ENCODE measurements at regions of chr14 and their contacts with region 1.

Region 1: DNA sequence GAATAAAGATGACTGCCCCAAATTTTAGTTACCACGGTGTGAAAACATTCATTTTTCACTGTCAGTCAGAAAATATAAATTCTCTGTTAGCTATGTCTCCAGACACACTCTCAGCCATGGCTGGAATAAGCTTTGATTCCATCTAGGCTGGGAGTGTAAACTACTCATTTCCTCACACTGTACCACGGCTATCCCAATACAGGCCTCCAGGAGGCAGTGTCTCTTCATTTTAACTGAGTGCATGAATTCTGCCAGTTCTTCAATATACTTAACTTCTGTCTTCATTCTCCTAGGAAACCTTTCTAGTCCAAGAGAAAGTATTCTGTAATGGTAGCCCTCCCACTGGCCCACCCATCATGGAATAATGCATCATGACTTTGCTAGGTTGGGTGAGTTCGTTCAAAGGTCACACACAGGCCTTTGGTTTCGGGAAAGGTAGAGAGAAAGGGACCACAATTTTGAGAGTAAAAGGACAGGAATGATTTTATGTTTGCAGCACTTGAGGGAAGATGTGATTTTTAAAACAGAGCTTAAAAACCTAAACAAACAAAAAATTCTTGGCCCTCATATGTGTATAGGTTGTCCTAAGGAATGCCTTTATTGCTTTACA is 381.1 kb downstream of the SEC23A start:
- DNase-seq: peak; percentile 65 to 83
- H3K4me3 ChIP-seq: no peak overlapping the region
- H3K27ac ChIP-seq: no peak overlapping the region
- H3K4me1 ChIP-seq: peaks cover 0 to 2% (median 0%) of the 10 kb centered on the region in 4 donors
- H3K27me3 ChIP-seq: no peaks in the 10 kb centered on the region
- CTCF ChIP-seq: peak in 5 of 7 experiments; percentile 63 to 78 (median 75)
- EP300 ChIP-seq: no peak
- POLR2A ChIP-seq: no peak

Region 2: DNA sequence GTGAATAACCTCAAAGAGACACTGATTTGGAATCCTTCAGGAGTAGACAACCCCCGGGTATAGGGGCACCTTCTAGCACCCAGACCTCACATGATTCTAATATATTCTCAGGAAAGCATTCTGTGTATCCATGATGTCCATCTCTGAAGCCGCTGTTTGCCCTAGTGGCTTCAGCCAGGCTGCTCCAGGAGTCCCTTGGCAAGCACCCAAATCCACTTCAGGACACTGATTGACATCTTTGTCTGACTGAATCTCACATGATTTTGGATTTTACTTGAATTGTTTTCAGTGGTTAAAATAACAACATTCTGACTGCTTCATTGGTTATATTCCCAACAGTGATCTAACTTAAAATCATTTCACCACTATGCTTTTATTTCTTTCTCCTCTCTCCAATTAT is 75.5 kb before region 1 on chr14:
- intact Hi-C with region 1: no loop called
- DNase-seq: no peak
- H3K4me3 ChIP-seq: no peak overlapping the region
- H3K27ac ChIP-seq: no peak overlapping the region
- H3K4me1 ChIP-seq: no peaks in the 10 kb centered on the region
- H3K27me3 ChIP-seq: no peaks in the 10 kb centered on the region
- CTCF ChIP-seq: no peak
- EP300 ChIP-seq: no peak
- POLR2A ChIP-seq: no peak

Region 3: DNA sequence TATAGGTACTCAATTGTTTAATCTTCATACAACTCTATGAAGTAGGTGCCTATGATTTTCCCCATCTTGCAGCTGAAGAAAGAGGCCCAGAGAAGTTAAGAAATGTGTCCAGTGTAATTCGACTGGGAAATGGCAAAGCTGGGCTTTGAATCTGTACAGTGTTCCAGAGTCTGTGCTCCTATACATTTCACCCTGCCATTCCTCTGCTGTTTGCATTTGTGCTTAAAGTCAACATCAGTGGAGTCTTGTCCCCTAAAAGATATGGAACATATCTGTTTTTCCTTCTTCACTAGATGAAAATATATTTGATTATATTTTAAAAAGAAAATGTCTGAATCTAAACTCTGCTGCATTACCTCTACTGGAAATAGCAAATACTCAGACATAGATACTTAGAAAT is 292.5 kb after region 1 on chr14:
- intact Hi-C with region 1: loop called (anchors 5 kb)
- DNase-seq: no peak
- H3K4me3 ChIP-seq: no peak overlapping the region
- H3K27ac ChIP-seq: no peak overlapping the region
- H3K4me1 ChIP-seq: peaks cover 0 to 8% (median 0%) of the 10 kb centered on the region in 4 donors
- H3K27me3 ChIP-seq: no peaks in the 10 kb centered on the region
- CTCF ChIP-seq: no peak
- EP300 ChIP-seq: no peak
- POLR2A ChIP-seq: no peak

Measured in stomach (tissue), 19 donors.